ENCODE measurements at regions of chr15 and their contacts with region 1.

Region 1: DNA sequence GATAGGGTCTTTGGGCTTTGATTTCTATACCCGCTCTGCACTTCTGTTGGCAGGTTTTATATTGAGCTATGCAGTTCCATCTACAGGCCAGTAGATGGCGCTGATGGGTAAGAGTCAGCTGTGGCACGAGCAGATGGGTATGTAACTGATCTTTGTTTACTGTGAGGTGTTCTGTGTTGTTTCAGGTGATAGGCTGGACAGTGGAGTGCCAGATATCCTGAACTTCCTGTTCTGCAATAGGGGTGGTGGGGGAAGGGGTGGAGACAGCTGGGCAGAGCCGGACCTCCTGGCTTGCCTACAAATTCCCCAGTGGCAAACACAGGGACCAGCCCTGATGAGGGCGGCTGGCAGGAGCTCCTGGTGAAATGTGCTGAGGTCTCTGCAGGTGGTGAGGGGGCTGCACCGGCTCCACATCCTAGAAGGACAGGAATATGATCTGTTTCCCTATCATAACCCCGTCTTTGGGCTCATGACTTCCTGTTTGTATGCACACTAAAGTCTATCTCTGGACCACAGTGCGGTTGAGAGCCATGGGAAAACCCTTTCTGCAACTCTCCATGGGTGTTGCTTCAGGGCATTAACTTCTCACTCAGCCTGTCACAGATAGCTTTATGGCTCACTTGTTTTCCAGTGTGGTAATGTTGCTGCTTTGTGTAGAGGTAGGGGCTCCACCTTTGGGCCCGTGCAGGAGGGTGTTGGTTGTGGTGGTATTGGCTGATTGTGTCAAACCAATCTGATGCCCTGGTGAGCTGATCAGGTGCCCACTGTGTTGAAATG is 13.4 kb upstream of the FAM98B start:
- DNase-seq: peak; percentile 55
- CTCF ChIP-seq: peak; percentile 92

Region 2: DNA sequence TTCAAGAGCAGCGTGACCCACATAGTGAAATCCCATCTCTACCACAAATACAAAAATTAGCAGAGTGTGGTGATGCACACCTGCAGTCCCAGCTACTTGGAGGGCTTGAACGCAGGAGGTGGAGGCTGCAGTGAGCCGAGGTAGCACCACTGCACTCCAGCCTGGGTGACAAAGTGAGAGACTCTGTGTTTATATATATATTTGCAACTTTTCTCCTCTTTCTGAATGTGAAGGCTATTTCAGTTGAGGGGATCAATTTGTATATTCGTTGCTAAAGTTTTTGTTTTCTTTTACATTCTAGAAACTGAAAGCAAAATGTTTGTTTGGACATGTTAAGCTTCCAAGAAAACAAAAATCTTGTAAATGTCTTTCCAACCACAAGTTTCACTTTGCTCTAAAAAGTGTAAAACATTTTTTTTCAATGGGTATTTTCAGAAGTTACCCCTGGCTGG is 16.4 kb before region 1 on chr15:
- CTCF ChIA-PET with region 1: interaction called, 41 read pairs
- POLR2A ChIA-PET with region 1: no interaction called
- DNase-seq: no peak
- CTCF ChIP-seq: no peak

Region 3: GRCh38 chr15:38461066-38461833 is 20.7 kb after region 1 on chr15:
- CTCF ChIA-PET with region 1: interaction called, 40 read pairs
- POLR2A ChIA-PET with region 1: no interaction called
- DNase-seq: peak; percentile 44
- CTCF ChIP-seq: no peak

Region 4: GRCh38 chr15:38490242-38490922 is 49.8 kb after region 1 on chr15:
- CTCF ChIA-PET with region 1: interaction called, 10 read pairs
- POLR2A ChIA-PET with region 1: no interaction called
- DNase-seq: no peak
- CTCF ChIP-seq: no peak

Region 5: GRCh38 chr15:38671675-38672254 is 231.2 kb after region 1 on chr15:
- CTCF ChIA-PET with region 1: interaction called, 13 read pairs
- POLR2A ChIA-PET with region 1: no interaction called
- DNase-seq: no peak
- CTCF ChIP-seq: peak; percentile 0

Region 6: GRCh38 chr15:38707802-38708671 is 267.5 kb after region 1 on chr15:
- CTCF ChIA-PET with region 1: interaction called, 37 read pairs
- POLR2A ChIA-PET with region 1: no interaction called
- DNase-seq: peak; percentile 52
- CTCF ChIP-seq: peak; percentile 61

Region 7: GRCh38 chr15:39472621-39473297 is 1032.2 kb after region 1 on chr15:
- CTCF ChIA-PET with region 1: no interaction called
- POLR2A ChIA-PET with region 1: no interaction called
- DNase-seq: no peak
- CTCF ChIP-seq: no peak

Measured in GM10248 (cell line).